ENCODE measurements at regions of chr9 and their contacts with region 1.

Region 1: GRCh38 chr9:90142580-90142979 is 500.0 kb downstream of the DIRAS2 start:
- DNase-seq: peak in 2 of 3 donors; percentile 33 to 61
- ATAC-seq: no peak
- H3K4me3 ChIP-seq: no peak overlapping the region
- H3K27ac ChIP-seq: no peak overlapping the region
- H3K4me1 ChIP-seq: no peaks in the 10 kb centered on the region
- H3K27me3 ChIP-seq: no peaks in the 10 kb centered on the region

Region 2: GRCh38 chr9:89999534-90000370 is 142.8 kb before region 1 on chr9:
- intact Hi-C with region 1: no loop called
- DNase-seq: peak; percentile 55 to 88 (median 85)
- ATAC-seq: peak; percentile 86 to 88
- H3K4me3 ChIP-seq: no peak overlapping the region
- H3K27ac ChIP-seq: peak overlapping the region; percentile 84
- H3K4me1 ChIP-seq: peaks cover 19% of the 10 kb centered on the region
- H3K27me3 ChIP-seq: no peaks in the 10 kb centered on the region

Region 3: GRCh38 chr9:90251316-90251715 is 108.7 kb after region 1 on chr9:
- intact Hi-C with region 1: no loop called
- DNase-seq: no peak
- ATAC-seq: no peak
- H3K4me3 ChIP-seq: no peak overlapping the region
- H3K27ac ChIP-seq: no peak overlapping the region
- H3K4me1 ChIP-seq: no peaks in the 10 kb centered on the region
- H3K27me3 ChIP-seq: no peaks in the 10 kb centered on the region

Region 4: DNA sequence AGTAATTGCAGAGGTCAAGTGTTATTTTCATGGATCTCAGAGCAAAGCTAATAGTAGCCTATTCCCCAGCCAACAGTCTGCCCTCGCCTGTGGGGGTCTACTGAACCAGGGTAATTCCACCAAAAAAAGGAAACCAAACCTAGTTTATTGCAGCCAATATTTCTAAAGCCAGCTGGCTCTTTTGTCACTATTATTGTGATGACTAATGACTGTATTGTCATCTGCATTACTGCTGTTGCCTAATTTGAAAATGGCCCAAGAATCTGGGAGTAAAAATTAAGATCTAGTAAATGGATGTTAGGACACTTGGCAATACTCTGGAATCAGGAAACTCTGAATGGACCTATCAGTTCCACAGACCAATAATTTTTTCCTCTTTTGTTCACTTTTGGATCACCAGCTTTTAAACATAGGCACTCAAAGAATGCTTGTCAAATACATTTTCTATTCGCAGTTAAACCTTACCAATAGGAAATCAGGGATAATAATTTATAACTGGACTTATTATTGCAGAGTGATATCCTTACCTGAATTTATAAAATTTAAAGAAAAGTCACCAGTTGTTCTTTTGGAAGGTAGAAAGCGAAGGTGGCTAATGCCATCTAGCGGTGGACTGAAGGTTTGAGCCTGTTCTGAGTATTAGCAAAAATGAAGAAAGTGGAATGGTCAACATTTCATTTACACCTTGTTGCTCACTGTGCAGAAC is 728.2 kb after region 1 on chr9:
- intact Hi-C with region 1: loop called in 3 of 4 experiments (anchors 5 to 10 kb)
- DNase-seq: no peak
- ATAC-seq: no peak
- H3K4me3 ChIP-seq: no peak overlapping the region
- H3K27ac ChIP-seq: no peak overlapping the region
- H3K4me1 ChIP-seq: no peaks in the 10 kb centered on the region
- H3K27me3 ChIP-seq: no peaks in the 10 kb centered on the region

Region 5: DNA sequence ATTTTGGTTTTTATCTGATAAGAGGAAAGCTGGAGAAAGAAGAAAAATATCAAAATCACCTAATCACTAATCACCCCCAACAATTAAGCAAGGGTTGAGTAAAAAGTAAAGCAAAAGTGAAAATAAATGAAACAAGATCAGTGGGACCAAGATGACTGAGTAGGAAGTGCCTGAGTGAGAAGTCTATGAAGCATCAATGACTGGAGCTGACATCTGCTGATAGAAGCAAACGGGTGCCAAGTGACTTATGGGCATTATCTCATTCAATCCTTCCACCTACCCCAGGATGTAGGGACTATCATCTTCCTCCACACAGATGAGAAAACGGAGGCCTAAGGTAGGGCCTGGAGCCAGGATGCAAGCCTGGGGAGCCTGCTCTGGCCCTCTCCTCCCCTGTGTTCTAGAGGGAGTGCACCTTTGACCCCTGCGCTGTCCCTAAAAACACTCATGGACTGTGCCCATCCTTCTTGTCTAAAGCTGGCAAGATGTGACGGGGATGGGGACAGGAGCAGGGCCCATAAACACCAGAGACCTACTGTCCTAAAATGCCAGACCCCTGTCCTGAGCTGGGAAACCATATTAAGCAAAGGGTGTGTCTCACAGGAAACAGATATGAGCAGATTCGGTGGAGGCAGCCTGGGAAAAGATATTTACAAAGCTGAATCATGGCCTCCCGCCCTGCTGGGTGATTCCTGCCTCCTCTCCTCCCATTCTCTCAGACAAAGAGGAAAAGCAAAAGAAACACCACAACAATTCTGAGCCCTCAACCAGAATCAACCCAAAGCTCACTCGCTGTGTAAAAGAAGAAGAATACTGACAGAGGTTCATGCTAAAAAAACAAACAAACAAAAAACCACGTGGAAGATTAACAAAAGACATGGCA is 1103.1 kb after region 1 on chr9:
- intact Hi-C with region 1: no loop called
- DNase-seq: no peak
- ATAC-seq: peak in 1 of 2 donors; percentile 89
- H3K4me3 ChIP-seq: no peak overlapping the region
- H3K27ac ChIP-seq: no peak overlapping the region
- H3K4me1 ChIP-seq: peaks cover 17% of the 10 kb centered on the region
- H3K27me3 ChIP-seq: no peaks in the 10 kb centered on the region

Measured in right cardiac atrium (tissue), 5 donors.